Vagina (tissue), 2 donors: ENCODE measurements at regions of chr2 and their contacts with region 1.

Region 1: GRCh38 chr2:68925295-68925896 is 27.3 kb downstream of the GKN2 start:
- DNase-seq: no peak
- H3K4me3 ChIP-seq: no peak overlapping the region
- H3K27ac ChIP-seq: no peak overlapping the region
- H3K4me1 ChIP-seq: no peaks in the 10 kb centered on the region
- H3K27me3 ChIP-seq: no peaks in the 10 kb centered on the region
- CTCF ChIP-seq: peak; percentile 71 to 83 (median 75)
- POLR2A ChIP-seq: no peak

Region 2: DNA sequence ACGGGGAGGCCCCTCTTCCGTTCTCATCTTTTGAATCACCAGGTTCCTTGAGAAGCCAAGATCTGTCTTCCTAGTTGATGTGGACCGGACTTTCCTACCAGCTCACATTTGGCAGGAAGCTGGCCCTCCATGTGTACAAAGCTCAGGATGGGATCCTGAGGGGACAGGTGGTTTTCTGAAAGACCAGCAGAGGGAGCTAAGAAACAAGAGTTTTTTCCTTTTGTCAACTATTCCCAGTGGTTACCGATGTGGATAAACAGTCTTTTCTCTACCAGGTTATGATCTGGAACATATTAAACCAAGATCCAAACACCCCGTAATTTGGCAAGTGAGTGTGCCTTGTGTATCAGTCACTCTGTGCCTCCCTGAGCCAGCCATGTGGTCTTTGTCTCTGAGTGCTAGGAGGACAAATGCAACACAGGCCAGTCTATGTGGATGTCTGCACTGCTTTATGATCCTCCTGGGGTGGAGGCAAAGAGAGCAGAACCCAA is 215.9 kb before region 1 on chr2:
- intact Hi-C with region 1: loop called (anchors 10 kb)
- DNase-seq: no peak
- H3K4me3 ChIP-seq: no peak overlapping the region
- H3K27ac ChIP-seq: no peak overlapping the region
- H3K4me1 ChIP-seq: no peaks in the 10 kb centered on the region
- H3K27me3 ChIP-seq: no peaks in the 10 kb centered on the region
- CTCF ChIP-seq: peak in 2 of 3 experiments; percentile 40 to 55
- POLR2A ChIP-seq: no peak

Region 3: GRCh38 chr2:68909793-68910674 is 15.4 kb before region 1 on chr2:
- intact Hi-C with region 1: no loop called
- DNase-seq: no peak
- H3K4me3 ChIP-seq: no peak overlapping the region
- H3K27ac ChIP-seq: no peak overlapping the region
- H3K4me1 ChIP-seq: peaks cover 16% of the 10 kb centered on the region
- H3K27me3 ChIP-seq: no peaks in the 10 kb centered on the region
- CTCF ChIP-seq: peak; percentile 65 to 92 (median 88)
- POLR2A ChIP-seq: no peak

Region 4: GRCh38 chr2:69428981-69429380 is 503.6 kb after region 1 on chr2:
- intact Hi-C with region 1: no loop called
- DNase-seq: no peak
- H3K4me3 ChIP-seq: no peak overlapping the region
- H3K27ac ChIP-seq: no peak overlapping the region
- H3K4me1 ChIP-seq: no peaks in the 10 kb centered on the region
- H3K27me3 ChIP-seq: no peaks in the 10 kb centered on the region
- CTCF ChIP-seq: no peak
- POLR2A ChIP-seq: no peak